ENCODE measurements at regions of chr19 and their contacts with region 1.

Region 1: DNA sequence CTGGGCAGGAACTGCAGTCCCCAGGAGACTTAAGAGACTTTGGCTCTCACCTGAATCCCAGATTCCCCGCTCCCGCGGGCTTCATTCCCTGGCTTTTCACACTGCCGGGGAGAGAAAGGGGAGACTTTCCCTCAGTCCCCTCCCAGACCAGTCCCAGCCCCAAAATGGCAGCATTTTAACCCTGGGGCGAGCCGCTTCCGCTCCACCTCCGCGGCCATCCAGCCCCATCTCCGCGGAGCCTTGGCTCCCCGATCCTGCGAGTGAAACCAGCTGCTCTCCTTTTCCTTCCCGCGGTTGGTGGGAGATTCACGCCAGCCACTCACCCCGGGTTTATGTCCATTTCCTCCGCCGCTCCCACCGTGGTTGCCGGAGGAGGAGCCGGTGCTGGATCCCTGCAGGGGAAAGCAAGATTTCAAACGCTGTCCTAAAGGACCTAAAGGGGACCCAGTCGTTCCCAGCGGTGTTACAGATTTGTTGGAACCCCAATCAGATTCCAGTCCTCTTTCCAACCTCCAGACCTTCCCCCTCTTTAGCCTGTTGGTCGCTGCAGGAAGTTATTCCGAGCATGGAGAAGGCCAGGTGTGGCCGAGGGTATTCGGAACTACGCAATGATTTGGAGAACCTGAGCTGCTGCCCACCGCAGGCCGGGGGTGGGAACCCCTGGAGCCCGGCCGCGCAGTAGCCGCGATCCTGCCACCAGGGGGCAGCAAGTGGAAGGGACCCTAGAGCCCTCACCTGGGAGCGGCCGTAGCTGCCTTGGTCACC is 3.4 kb downstream of the DMKN start:
- DNase-seq: peak; percentile 87
- ATAC-seq: peak; percentile 79
- H3K4me3 Mint-ChIP-seq: peak overlapping the region; percentile 43
- H3K27ac Mint-ChIP-seq: no peak overlapping the region
- H3K4me1 Mint-ChIP-seq: peaks cover 15% of the 10 kb centered on the region
- H3K27me3 Mint-ChIP-seq: peaks cover 43% of the 10 kb centered on the region

Region 2: DNA sequence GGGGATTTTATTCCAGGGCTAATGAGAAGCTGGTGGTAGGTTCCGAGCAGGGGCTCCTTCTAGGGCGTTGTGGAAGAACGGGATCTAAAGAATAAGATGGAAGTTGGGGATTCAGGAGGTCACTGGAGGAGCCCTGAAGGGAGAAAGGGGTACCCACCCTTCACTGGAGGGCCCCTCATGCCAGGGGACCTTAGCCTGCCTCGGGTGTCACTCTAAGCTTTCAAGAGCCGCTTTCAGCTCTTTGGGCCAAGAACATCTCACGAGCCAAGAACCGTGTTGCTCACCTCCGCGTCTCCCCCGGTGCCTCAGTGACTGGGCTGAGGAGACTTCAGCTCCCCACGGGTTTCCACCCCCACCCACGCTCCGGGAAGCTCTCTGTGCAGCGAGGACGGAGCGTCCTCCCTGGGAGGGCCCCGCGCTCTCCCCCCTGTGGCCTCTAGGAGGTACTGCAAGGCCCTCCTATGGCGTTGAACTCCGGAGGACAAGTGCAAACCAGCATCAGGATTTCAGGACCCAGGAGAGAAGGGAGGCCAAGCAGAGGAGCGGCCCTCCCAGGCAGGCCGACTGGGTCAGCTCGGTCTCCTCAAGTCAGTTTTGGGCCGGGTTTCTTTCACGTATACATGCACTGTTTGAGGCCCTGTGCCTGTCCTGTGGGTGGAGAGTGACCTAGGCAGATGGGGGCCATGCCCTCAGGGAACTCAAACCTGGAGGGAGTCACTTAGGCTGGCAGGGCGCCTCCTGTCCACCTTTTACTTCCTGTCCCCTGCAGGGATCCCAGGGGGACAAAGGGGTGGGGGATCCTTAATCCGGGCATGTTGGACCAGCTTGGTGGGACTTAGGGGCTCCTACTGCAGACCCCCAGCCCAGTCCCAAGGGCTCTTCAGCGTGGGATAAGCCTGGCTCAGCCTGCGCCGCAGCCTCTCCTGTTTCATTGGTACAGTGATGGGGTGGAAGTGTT is 14.7 kb before region 1 on chr19:
- CTCF ChIA-PET with region 1: interaction called, 15 read pairs
- POLR2A ChIA-PET with region 1: no interaction called
- intact Hi-C with region 1: no loop called
- DNase-seq: peak; percentile 91
- ATAC-seq: peak; percentile 97
- H3K4me3 Mint-ChIP-seq: no peak overlapping the region
- H3K27ac Mint-ChIP-seq: peak overlapping the region; percentile 43
- H3K4me1 Mint-ChIP-seq: peaks cover 5% of the 10 kb centered on the region
- H3K27me3 Mint-ChIP-seq: peaks cover 6% of the 10 kb centered on the region

Region 3: DNA sequence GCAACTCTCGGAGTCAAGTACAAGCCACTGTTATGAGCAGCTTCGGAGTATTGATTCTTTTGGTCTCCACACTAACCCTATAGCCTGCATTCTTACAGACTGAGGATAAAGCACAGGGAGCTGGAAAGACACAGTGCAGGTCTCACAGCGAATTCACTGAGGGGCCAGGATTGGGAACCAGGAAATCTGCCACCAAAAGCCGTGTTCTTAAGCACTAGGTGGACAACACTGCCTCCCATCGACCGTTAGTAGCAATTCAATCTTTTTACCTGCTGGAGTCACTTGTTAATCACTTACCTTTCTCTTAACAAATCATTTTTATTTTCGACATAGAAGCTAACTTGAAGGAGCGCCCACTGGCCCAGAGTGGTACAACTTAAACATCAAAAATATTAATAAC is 82.2 kb after region 1 on chr19:
- CTCF ChIA-PET with region 1: interaction called, 16 read pairs
- POLR2A ChIA-PET with region 1: no interaction called
- intact Hi-C with region 1: loop called (anchors 1 kb)
- DNase-seq: peak; percentile 49
- ATAC-seq: no peak
- H3K4me3 Mint-ChIP-seq: no peak overlapping the region
- H3K27ac Mint-ChIP-seq: no peak overlapping the region
- H3K4me1 Mint-ChIP-seq: peaks cover 4% of the 10 kb centered on the region
- H3K27me3 Mint-ChIP-seq: peaks cover 4% of the 10 kb centered on the region